ENCODE measurements at regions of chr2 and their contacts with region 1.

Region 1: GRCh38 chr2:167331636-167332232 is 443.5 kb downstream of the XIRP2 start:
- DNase-seq: no peak

Region 2: GRCh38 chr2:166335284-166335683 is 996.5 kb before region 1 on chr2:
- intact Hi-C with region 1: no loop called
- DNase-seq: no peak

Region 3: DNA sequence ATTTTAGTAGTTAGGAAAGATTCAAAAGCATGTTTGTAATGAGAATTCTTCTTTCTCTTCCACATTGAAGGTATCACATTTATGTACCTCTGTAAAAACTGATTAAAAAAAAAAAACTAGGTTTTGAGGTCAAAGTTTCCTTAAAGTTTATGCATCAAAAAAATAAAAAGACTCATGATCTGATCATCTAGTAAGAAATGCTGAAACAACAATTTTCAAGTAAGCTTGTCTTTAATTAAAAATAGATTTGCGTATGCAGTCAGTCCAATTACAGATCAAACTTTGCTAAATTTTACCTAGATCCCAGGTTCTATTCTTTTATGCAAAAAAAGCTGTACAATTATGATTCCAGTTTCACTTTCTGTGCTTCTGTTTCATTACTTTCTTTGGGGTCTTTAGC is 34.4 kb before region 1 on chr2:
- intact Hi-C with region 1: loop called in 1 of 2 experiments (anchors 1 kb)
- DNase-seq: no peak

Region 4: DNA sequence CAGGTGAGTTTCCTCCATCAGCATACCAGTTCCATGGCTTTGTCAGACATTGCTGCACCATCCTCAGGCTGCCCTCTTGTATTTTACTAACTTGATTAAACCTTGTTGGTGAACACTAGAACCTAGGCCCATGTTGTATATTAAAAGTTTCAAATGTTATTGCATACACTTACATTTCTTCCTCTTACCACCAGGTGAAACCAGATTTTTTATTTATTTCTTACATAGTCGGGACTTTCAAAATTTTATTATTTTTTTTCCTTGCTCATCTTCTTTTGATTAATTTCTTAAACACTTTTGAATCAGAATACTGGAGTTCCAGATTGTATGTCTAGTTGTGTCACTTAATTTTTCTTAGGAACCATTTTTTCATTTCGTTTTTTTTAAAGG is 1130.2 kb after region 1 on chr2:
- intact Hi-C with region 1: loop called in 1 of 2 experiments (anchors 5 kb)
- DNase-seq: no peak

Measured in posterior vena cava (tissue), 2 donors.